ENCODE measurements at regions of chr11 and their contacts with region 1.

Region 1: GRCh38 chr11:111926505-111927391 is 8.0 kb downstream of the C11orf52 start:
- DNase-seq: peak; percentile 89 to 98 (median 96)
- H3K4me3 ChIP-seq: peak overlapping the region; percentile 72
- H3K4me3 Mint-ChIP-seq: peak overlapping the region; percentile 84 to 92 (median 87)
- H3K27ac ChIP-seq: peak overlapping the region; percentile 80
- H3K27ac Mint-ChIP-seq: peak overlapping the region; percentile 89 to 96 (median 95)
- H3K4me1 ChIP-seq: peaks cover 9% of the 10 kb centered on the region
- H3K4me1 Mint-ChIP-seq: peaks cover 14 to 23% (median 15%) of the 10 kb centered on the region in 3 donors
- H3K27me3 ChIP-seq: no peaks in the 10 kb centered on the region
- H3K27me3 Mint-ChIP-seq: peaks cover 3 to 5% of the 10 kb centered on the region in 2 donors

Region 2: GRCh38 chr11:111718436-111718835 is 208.3 kb before region 1 on chr11:
- CTCF ChIA-PET with region 1: no interaction called
- POLR2A ChIA-PET with region 1: no interaction called
- DNase-seq: no peak
- H3K4me3 ChIP-seq: no peak overlapping the region
- H3K4me3 Mint-ChIP-seq: no peak overlapping the region
- H3K27ac ChIP-seq: no peak overlapping the region
- H3K27ac Mint-ChIP-seq: peak overlapping the region in 3 of 8 donors; percentile 9 to 83 (median 14)
- H3K4me1 ChIP-seq: no peaks in the 10 kb centered on the region
- H3K4me1 Mint-ChIP-seq: peaks cover 0 to 7% (median 1%) of the 10 kb centered on the region in 3 donors
- H3K27me3 ChIP-seq: no peaks in the 10 kb centered on the region
- H3K27me3 Mint-ChIP-seq: peaks cover 0 to 4% of the 10 kb centered on the region in 2 donors

Region 3: DNA sequence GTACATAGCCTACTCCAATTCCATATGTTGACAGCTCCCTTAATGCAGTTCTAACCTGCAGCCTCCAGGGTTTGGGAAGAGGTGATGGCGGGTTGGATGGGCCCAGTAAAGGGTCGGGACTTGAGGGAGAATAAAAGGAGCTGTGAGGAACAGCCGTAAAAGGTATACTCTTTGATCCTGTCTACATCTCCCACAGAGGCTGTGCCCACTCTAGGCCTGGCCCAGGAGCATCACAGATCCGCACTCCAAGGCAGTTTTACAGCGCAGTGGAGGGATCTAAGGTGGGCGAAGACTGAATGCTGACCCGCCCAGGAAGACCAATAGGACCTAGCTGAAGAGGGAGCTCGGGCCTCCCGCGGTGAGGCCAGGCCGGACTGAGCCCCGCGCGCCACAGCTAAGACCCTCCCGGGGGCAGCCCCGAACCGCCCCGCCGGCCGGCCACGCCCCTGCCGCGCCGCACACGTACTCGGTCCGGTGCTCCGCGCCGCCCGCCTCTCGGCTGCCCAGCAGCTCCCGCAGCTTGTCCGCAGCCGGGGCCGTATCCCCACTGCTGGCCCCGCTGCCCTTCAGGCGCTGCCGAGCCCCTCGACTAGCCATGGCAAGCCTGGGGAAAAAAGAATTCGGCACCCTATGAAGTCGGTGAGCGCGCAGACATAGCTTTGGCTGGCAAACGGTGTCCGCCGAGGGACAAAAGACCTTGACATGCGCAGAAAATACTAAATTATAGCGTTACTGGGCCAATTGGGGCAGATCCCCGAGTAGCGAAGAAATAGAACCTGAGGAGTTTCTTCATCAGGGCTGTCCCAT is 55.7 kb before region 1 on chr11 and contains the start of gene ALG9:
- CTCF ChIA-PET with region 1: interaction called, 11 read pairs
- POLR2A ChIA-PET with region 1: interaction called, 17 read pairs
- DNase-seq: peak; percentile 82 to 92 (median 85)
- H3K4me3 ChIP-seq: peak within 1 kb of the TSS; percentile 81
- H3K4me3 Mint-ChIP-seq: peak within 1 kb of the TSS; percentile 93 to 96 (median 94)
- H3K27ac ChIP-seq: peak within 1 kb of the TSS; percentile 88
- H3K27ac Mint-ChIP-seq: peak within 1 kb of the TSS; percentile 90 to 98 (median 97)
- H3K4me1 ChIP-seq: peaks cover 21% of the 10 kb centered on the region
- H3K4me1 Mint-ChIP-seq: peaks cover 22 to 47% (median 43%) of the 10 kb centered on the region in 3 donors
- H3K27me3 ChIP-seq: no peaks in the 10 kb centered on the region
- H3K27me3 Mint-ChIP-seq: peaks cover 0 to 2% of the 10 kb centered on the region in 2 donors
- total RNA-seq, gene ALG9: 37.4 to 38.0 TPM

Region 4: GRCh38 chr11:111878849-111879636 is 47.7 kb before region 1 on chr11 and contains the starts of genes CFAP68 and FDXACB1:
- CTCF ChIA-PET with region 1: interaction called, 8 read pairs
- POLR2A ChIA-PET with region 1: interaction called, 11 read pairs
- DNase-seq: peak; percentile 90 to 99 (median 97)
- H3K4me3 ChIP-seq: peak within 1 kb of the TSS; percentile 84
- H3K4me3 Mint-ChIP-seq: peak within 1 kb of the TSS; percentile 88 to 98 (median 94)
- H3K27ac ChIP-seq: peak within 1 kb of the TSS; percentile 100
- H3K27ac Mint-ChIP-seq: peak within 1 kb of the TSS; percentile 95 to 100 (median 100)
- H3K4me1 ChIP-seq: peaks cover 18% of the 10 kb centered on the region
- H3K4me1 Mint-ChIP-seq: peaks cover 15 to 34% (median 17%) of the 10 kb centered on the region in 3 donors
- H3K27me3 ChIP-seq: no peaks in the 10 kb centered on the region
- H3K27me3 Mint-ChIP-seq: no peaks in the 10 kb centered on the region
- total RNA-seq, gene CFAP68: 36.7 to 44.3 TPM
- total RNA-seq, gene FDXACB1: 11.6 to 12.7 TPM

Region 5: GRCh38 chr11:111938687-111939160 is 12.0 kb after region 1 on chr11:
- CTCF ChIA-PET with region 1: interaction called, 18 read pairs
- POLR2A ChIA-PET with region 1: interaction called, 14 read pairs
- DNase-seq: peak in 3 of 5 donors; percentile 9 to 56 (median 15)
- H3K4me3 ChIP-seq: peak overlapping the region; percentile 68
- H3K4me3 Mint-ChIP-seq: peak overlapping the region; percentile 62 to 91 (median 82)
- H3K27ac ChIP-seq: peak overlapping the region; percentile 36
- H3K27ac Mint-ChIP-seq: peak overlapping the region; percentile 62 to 89 (median 78)
- H3K4me1 ChIP-seq: peaks cover 30% of the 10 kb centered on the region
- H3K4me1 Mint-ChIP-seq: peaks cover 24 to 34% (median 34%) of the 10 kb centered on the region in 3 donors
- H3K27me3 ChIP-seq: no peaks in the 10 kb centered on the region
- H3K27me3 Mint-ChIP-seq: peaks cover 0 to 2% of the 10 kb centered on the region in 2 donors

Region 6: DNA sequence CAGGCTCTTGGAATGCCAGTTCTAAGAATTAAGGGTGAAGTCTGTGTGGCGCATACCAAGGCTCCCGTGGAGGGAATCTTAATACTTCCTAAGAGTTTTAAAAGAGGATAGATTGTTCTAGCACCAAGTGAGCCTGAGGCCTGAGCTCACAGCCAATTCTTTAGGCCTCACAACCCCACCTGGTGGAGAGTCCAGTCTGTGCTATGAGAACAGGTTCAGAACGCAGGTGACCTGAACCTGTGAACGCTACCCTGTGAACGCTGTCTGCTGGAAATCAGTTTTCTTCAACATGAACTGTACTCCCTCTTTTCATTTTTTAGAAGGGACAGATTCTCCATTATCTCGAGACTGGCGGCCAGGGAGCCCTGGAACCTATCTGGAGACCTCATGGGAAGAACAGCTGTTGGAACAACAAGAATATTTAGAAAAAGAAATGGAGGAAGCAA is 55.3 kb after region 1 on chr11:
- CTCF ChIA-PET with region 1: interaction called, 31 read pairs
- POLR2A ChIA-PET with region 1: no interaction called
- DNase-seq: peak in 4 of 5 donors; percentile 10 to 62 (median 36)
- H3K4me3 ChIP-seq: no peak overlapping the region
- H3K4me3 Mint-ChIP-seq: no peak overlapping the region
- H3K27ac ChIP-seq: no peak overlapping the region
- H3K27ac Mint-ChIP-seq: peak overlapping the region in 1 of 8 donors; percentile 23
- H3K4me1 ChIP-seq: peaks cover 5% of the 10 kb centered on the region
- H3K4me1 Mint-ChIP-seq: peaks cover 7 to 8% (median 7%) of the 10 kb centered on the region in 3 donors
- H3K27me3 ChIP-seq: peaks cover 6% of the 10 kb centered on the region
- H3K27me3 Mint-ChIP-seq: peaks cover 15 to 24% of the 10 kb centered on the region in 2 donors